ENCODE measurements at regions of chr4 and their contacts with region 1.

Region 1: DNA sequence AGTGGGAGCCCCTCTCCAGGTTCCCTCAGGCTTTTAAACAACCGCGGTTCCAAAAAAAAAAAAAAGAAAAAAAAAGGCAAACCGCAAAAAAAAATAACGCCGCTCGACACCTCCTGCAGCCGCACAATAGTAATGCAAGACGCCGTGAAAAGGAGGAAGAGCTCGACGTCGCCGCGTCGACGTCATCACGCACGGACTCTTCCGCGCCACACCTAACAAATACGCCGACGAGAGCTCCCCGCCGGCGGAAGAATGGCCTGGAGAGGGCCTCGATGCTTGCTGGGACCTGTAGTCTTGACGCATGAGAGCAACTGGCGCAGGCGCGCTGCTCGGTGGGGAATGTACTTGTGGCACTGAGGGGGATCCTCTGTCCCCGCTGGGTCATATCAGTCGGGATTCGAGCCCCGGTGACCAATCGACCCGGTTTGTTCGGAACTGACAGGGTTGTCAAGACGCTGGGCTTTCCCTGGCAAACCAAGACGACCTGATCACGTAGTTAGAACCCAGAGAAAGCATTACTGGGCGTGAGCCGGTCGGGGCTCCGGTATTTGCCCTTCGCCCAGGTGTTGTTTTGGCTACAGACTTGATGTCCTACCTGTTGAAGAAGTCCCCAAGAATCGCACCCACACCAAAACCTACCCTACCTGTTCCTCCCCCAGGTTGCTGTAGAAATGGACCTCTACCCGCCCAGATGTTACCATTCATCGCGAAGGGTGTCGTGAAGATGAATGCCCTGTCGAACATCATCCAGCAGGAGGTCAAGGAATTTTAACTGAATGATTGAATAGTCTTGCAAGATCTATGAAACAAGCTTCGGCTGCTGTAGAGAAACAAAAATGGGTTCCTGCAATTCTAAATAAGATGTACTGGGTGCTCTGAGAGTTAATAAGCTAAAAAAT is at the start of gene CBR4:
- DNase-seq: peak; percentile 98
- H3K4me3 Mint-ChIP-seq: peak within 1 kb of the TSS; percentile 94
- H3K27ac Mint-ChIP-seq: peak within 1 kb of the TSS; percentile 93
- H3K4me1 Mint-ChIP-seq: peaks cover 25% of the 10 kb centered on the region
- H3K27me3 Mint-ChIP-seq: peaks cover 6% of the 10 kb centered on the region
- total RNA-seq, gene CBR4: 20.6 and 22.8 TPM in 2 replicates

Region 2: GRCh38 chr4:168318266-168318895 is 692.0 kb before region 1 on chr4 and contains the start of gene DDX60:
- intact Hi-C with region 1: loop called (anchors 5 kb)
- DNase-seq: peak; percentile 96
- H3K4me3 Mint-ChIP-seq: peak within 1 kb of the TSS; percentile 83
- H3K27ac Mint-ChIP-seq: peak within 1 kb of the TSS; percentile 96
- H3K4me1 Mint-ChIP-seq: peaks cover 51% of the 10 kb centered on the region
- H3K27me3 Mint-ChIP-seq: no peaks in the 10 kb centered on the region
- total RNA-seq, gene DDX60: 15.2 and 17.6 TPM in 2 replicates

Region 3: DNA sequence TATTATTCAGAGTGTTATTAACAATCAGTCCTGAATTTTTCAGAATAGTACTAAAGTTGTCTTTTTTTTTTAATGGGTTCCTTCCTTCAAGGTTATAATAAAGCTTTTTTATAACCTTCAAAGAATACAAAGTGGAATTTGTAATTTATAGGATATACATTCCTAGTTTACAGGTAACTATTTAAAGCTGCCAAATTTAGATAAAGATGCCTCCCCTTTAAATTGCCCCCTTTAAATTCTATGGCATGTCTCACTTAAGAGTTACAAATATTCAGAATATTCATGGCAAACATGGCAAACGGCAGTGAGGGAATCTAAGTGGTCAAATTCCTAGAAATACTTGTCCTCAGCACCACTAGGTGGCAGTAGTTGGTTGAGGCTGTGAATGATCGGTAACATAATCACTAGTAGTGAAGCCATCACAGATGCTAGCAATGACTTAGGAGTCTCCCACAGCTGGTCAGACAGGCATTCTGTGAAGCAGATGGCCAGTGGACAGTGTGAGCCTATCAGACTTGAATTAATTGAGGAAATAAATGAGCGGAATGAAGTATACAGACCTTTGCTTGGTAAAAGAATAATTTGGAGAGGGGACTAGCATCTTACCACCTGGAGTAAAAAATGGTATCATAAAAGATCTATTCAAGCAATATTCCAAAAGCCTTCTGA is 86.7 kb before region 1 on chr4:
- intact Hi-C with region 1: loop called (anchors 1 kb)
- DNase-seq: peak; percentile 85
- H3K4me3 Mint-ChIP-seq: no peak overlapping the region
- H3K27ac Mint-ChIP-seq: no peak overlapping the region
- H3K4me1 Mint-ChIP-seq: peaks cover 2% of the 10 kb centered on the region
- H3K27me3 Mint-ChIP-seq: no peaks in the 10 kb centered on the region

Region 4: GRCh38 chr4:168960716-168961115 is 49.7 kb before region 1 on chr4:
- intact Hi-C with region 1: no loop called
- DNase-seq: no peak
- H3K4me3 Mint-ChIP-seq: no peak overlapping the region
- H3K27ac Mint-ChIP-seq: no peak overlapping the region
- H3K4me1 Mint-ChIP-seq: no peaks in the 10 kb centered on the region
- H3K27me3 Mint-ChIP-seq: no peaks in the 10 kb centered on the region

Region 5: DNA sequence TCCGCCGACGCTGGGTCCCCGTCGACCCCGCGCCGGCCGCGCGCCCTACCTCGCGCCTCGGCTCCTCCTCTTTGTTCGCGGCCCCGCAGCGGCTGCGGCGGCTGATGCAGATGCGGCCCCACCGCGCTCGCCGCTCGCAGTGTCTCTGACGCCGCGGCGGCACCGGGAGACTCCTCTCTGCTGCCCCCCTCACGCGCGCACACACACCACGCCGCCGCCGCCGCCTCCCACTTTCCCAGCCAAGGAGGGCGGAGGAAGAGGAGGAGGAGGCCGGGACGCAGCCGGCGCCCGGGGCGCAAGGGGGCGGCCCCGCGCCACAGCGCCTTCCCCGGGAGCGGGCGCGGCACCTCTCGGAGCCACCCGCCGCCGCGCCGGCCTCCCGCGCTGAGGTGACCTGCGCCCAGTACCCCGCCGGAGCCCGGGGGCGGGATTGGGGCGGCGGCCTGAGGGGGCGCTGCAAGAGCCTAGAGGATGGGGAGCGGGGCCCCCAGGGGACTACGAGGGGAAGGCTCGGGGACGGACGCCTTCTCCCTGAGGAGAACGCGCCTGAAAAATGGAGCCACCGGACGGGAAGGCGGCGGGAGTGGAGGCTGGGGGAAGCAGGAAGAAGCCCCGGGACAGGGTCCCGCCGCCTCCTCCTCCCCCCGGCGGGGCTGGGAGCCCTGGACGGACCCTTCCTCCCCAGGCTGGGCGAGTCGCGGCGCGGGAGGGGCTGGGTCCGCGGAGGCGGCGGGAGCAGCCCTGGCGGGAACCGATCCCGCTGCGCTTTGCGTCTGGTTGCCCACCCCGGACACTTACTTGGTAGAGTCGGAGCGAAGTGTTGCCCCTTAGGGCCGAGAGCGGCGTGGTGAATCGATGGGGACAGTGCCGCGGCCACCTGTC is 260.7 kb after region 1 on chr4 and contains the start of gene SH3RF1:
- intact Hi-C with region 1: loop called (anchors 2 kb)
- DNase-seq: peak; percentile 73
- H3K4me3 Mint-ChIP-seq: peak within 1 kb of the TSS; percentile 83
- H3K27ac Mint-ChIP-seq: no peak within 1 kb of the TSS
- H3K4me1 Mint-ChIP-seq: peaks cover 10% of the 10 kb centered on the region
- H3K27me3 Mint-ChIP-seq: peaks cover 64% of the 10 kb centered on the region
- total RNA-seq, gene SH3RF1: 0.66 and 0.68 TPM in 2 replicates

Region 6: GRCh38 chr4:169416997-169417396 is 406.6 kb after region 1 on chr4:
- intact Hi-C with region 1: loop called (anchors 5 kb)
- DNase-seq: no peak
- H3K4me3 Mint-ChIP-seq: no peak overlapping the region
- H3K27ac Mint-ChIP-seq: no peak overlapping the region
- H3K4me1 Mint-ChIP-seq: peaks cover 22% of the 10 kb centered on the region
- H3K27me3 Mint-ChIP-seq: no peaks in the 10 kb centered on the region

Region 7: GRCh38 chr4:169757575-169758184 is 747.3 kb after region 1 on chr4 and contains the start of gene HPF1:
- intact Hi-C with region 1: loop called (anchors 10 kb)
- DNase-seq: peak; percentile 98
- H3K4me3 Mint-ChIP-seq: peak within 1 kb of the TSS; percentile 89
- H3K27ac Mint-ChIP-seq: peak within 1 kb of the TSS; percentile 36
- H3K4me1 Mint-ChIP-seq: peaks cover 20% of the 10 kb centered on the region
- H3K27me3 Mint-ChIP-seq: peaks cover 10% of the 10 kb centered on the region
- total RNA-seq, gene HPF1: 18.8 and 34.0 TPM in 2 replicates

Region 8: GRCh38 chr4:170027181-170027829 is 1016.9 kb after region 1 on chr4:
- intact Hi-C with region 1: loop called (anchors 1 kb)
- DNase-seq: peak; percentile 96
- H3K4me3 Mint-ChIP-seq: peak overlapping the region; percentile 89
- H3K27ac Mint-ChIP-seq: peak overlapping the region; percentile 76
- H3K4me1 Mint-ChIP-seq: peaks cover 10% of the 10 kb centered on the region
- H3K27me3 Mint-ChIP-seq: peaks cover 67% of the 10 kb centered on the region